Panc1 (cell line): ENCODE measurements at regions of chr15 and their contacts with region 1.

Region 1: GRCh38 chr15:79896637-79897379 is at the start of gene MTHFS:
- DNase-seq: no peak
- ATAC-seq: peak; percentile 99
- H3K4me3 ChIP-seq: peak within 1 kb of the TSS; percentile 70 to 82
- H3K27ac ChIP-seq: peak within 1 kb of the TSS; percentile 89
- H3K4me1 ChIP-seq: peaks cover 31% of the 10 kb centered on the region
- H3K27me3 ChIP-seq: no peaks in the 10 kb centered on the region
- CTCF ChIP-seq: peak; percentile 77
- total RNA-seq, gene MTHFS: 50.0 TPM

Region 2: DNA sequence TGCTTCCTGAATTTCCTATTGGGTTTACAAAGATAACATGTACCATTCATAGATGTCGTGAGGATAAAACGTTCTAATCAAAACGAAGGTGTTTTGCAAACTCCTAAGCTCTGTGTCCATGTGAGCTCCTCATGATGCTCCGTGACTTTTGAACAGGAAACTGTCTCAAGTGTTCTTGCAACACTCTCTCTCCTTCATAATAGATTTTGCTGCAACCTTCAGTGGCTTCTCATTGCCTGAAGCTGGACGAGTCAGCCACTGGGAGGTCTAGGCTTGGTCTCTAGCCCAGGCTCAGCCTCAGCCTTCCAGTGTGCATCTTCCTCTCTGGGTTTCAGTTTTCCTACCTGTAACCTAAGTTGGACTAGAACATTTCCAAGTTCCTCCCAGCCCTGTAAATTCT is 92.9 kb after region 1 on chr15:
- CTCF ChIA-PET with region 1: no interaction called
- POLR2A ChIA-PET with region 1: no interaction called
- in situ Hi-C with region 1: no loop called
- intact Hi-C with region 1: loop called (anchors 2 kb)
- DNase-seq: no peak
- ATAC-seq: no peak
- H3K4me3 ChIP-seq: no peak overlapping the region
- H3K27ac ChIP-seq: no peak overlapping the region
- H3K4me1 ChIP-seq: no peaks in the 10 kb centered on the region
- H3K27me3 ChIP-seq: no peaks in the 10 kb centered on the region
- CTCF ChIP-seq: no peak